AG04450 (cell line): ENCODE measurements at regions of chr16 and their contacts with region 1.

Region 1: DNA sequence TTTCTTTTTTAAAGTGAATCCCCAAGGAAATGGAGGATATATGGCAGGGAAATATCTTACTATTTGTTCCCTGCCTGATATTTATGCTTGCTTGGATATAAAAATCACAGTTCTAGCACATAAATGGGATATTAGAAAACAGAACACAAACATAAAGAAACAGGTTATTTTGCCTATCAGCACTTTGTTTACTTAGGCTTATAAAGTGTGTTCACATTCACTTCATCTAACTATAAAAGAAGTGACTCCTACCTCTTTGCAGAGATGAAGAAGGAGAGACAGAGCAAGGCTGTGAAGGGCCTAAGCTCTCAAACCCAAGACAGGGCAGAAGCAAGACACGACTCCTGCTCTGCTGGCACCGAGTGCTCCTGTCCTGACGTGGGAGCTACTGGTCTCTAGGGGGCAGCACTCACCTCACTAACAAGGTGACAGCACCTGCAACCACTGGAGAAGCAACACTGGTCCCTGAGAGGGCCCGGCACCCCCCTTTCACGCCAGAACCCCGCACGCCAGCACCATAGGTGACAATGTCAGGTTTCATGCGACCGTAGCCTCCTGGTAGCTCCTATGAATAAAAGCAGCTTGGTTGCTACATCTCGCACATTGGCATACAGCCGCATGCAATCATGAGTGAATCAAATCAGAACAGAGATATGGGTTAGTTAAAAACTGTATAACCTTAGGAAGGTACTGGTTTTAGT is 32.0 kb downstream of the MBTPS1 start:
- DNase-seq: peak; percentile 10
- H3K4me3 ChIP-seq: no peak overlapping the region
- H3K27ac ChIP-seq: no peak overlapping the region
- H3K27me3 ChIP-seq: no peaks in the 10 kb centered on the region
- CTCF ChIP-seq: peak; percentile 84

Region 2: DNA sequence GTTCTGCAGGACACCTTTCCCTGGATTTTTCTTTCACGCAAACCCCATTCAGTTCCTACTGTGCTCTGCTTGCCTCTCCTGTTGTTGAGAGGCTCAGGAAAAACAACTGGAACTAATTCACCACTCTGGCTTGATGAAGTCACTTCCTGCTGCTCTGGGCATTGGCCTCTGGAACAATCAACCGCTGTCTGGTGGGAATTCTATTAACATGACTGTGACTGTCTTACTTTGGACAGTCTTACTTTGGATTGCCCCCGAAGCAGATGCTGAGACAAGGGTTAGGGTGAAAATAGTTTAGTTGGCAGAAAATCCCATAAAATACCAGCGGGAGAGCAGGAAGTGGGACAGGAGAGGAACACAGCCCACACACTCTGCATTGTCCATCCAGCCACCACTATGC is 366.9 kb before region 1 on chr16:
- CTCF ChIA-PET with region 1: no interaction called
- POLR2A ChIA-PET with region 1: no interaction called
- DNase-seq: no peak
- H3K4me3 ChIP-seq: no peak overlapping the region
- H3K27ac ChIP-seq: no peak overlapping the region
- H3K27me3 ChIP-seq: no peaks in the 10 kb centered on the region
- CTCF ChIP-seq: no peak

Region 3: DNA sequence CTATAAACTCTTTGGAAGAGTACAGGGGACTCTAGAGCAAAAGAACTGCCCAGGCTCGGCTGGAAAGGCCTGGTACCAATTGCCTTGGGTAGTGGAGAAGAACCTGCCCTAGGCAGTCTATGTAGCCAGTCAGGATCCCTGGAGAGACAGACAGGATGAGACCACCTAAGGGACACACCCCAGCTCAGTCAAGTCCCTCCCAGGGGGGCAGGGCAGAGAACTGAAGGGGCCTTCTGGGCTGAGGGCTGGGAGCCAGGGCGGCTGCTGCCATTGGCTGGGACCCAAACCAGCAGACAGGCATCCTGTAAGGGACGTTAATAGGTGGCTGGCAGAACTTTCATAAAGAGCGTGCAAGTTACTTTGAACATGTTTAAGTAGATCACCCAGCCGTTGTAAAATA is 29.4 kb before region 1 on chr16:
- CTCF ChIA-PET with region 1: interaction called, 11 read pairs
- POLR2A ChIA-PET with region 1: no interaction called
- DNase-seq: no peak
- H3K4me3 ChIP-seq: no peak overlapping the region
- H3K27ac ChIP-seq: no peak overlapping the region
- H3K27me3 ChIP-seq: no peaks in the 10 kb centered on the region
- CTCF ChIP-seq: no peak

Region 4: GRCh38 chr16:84098936-84099335 is 14.2 kb after region 1 on chr16:
- CTCF ChIA-PET with region 1: interaction called, 10 read pairs
- POLR2A ChIA-PET with region 1: no interaction called
- DNase-seq: no peak
- H3K4me3 ChIP-seq: no peak overlapping the region
- H3K27ac ChIP-seq: no peak overlapping the region
- H3K27me3 ChIP-seq: no peaks in the 10 kb centered on the region
- CTCF ChIP-seq: no peak

Region 5: DNA sequence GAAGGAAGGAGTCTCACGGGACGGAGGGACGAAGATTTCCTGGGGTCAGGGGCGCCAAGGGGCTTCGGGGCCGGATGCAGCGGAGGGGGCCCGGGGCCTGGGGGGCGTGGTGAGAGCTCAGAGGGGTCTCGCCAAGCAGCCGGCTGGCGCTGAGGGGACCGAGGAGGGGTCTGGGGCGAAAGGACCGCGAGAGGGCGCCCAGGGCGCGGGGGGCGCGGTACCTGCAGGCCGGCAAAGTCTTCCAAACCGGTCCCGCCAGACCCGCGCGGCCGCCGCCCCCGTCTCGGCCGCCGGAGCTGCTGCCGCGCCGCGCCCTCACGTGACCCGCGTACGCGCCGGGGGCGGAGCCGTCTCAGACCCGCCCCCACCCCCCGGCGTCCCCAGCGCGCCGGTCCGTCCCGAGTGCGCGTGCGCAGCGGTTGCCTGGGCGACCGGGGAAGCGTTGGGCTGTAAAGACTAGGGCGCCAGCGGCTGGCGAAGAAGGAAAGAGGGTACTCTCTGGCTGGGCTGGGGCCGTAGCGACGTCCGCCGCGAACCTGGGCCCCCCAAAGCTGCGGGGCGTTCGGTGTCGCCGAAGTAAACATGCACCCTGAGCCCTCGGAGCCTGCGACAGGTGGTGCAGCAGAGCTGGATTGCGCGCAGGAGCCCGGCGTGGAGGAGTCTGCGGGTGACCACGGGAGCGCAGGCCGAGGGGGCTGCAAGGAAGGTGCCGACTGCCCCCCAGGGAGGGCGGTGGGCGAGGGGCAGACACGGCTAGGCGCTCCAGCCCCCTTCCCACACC is 60.3 kb after region 1 on chr16 and contains the starts of genes DNAAF1 and HSDL1:
- CTCF ChIA-PET with region 1: no interaction called
- POLR2A ChIA-PET with region 1: no interaction called
- DNase-seq: peak; percentile 45
- H3K4me3 ChIP-seq: peak within 1 kb of the TSS; percentile 80
- H3K27ac ChIP-seq: no peak within 1 kb of the TSS
- H3K27me3 ChIP-seq: peaks cover 7% of the 10 kb centered on the region
- CTCF ChIP-seq: no peak
- polyA plus RNA-seq, gene DNAAF1: not detected in 2 replicates
- polyA plus RNA-seq, gene HSDL1: 23.7 and 29.5 TPM in 2 replicates